ENCODE measurements at regions of chr3 and their contacts with region 1.

Region 1: GRCh38 chr3:119559441-119559963 is at the start of gene CD80:
- DNase-seq: peak; percentile 58
- ATAC-seq: peak; percentile 54
- H3K4me3 Mint-ChIP-seq: peak within 1 kb of the TSS; percentile 90
- H3K27ac Mint-ChIP-seq: peak within 1 kb of the TSS; percentile 88
- H3K4me1 Mint-ChIP-seq: peaks cover 92% of the 10 kb centered on the region
- H3K27me3 Mint-ChIP-seq: no peaks in the 10 kb centered on the region
- CTCF ChIP-seq: no peak
- total RNA-seq, gene CD80: 71.4 and 88.1 TPM in 2 replicates

Region 2: GRCh38 chr3:119293871-119294695 is 265.4 kb before region 1 on chr3 and contains the start of gene ARHGAP31:
- CTCF ChIA-PET with region 1: no interaction called
- POLR2A ChIA-PET with region 1: no interaction called
- intact Hi-C with region 1: loop called (anchors 1 kb)
- DNase-seq: peak; percentile 56
- ATAC-seq: peak; percentile 73
- H3K4me3 Mint-ChIP-seq: peak within 1 kb of the TSS; percentile 88
- H3K27ac Mint-ChIP-seq: peak within 1 kb of the TSS; percentile 90
- H3K4me1 Mint-ChIP-seq: peaks cover 61% of the 10 kb centered on the region
- H3K27me3 Mint-ChIP-seq: no peaks in the 10 kb centered on the region
- CTCF ChIP-seq: no peak
- total RNA-seq, gene ARHGAP31: 23.7 and 26.0 TPM in 2 replicates

Region 3: DNA sequence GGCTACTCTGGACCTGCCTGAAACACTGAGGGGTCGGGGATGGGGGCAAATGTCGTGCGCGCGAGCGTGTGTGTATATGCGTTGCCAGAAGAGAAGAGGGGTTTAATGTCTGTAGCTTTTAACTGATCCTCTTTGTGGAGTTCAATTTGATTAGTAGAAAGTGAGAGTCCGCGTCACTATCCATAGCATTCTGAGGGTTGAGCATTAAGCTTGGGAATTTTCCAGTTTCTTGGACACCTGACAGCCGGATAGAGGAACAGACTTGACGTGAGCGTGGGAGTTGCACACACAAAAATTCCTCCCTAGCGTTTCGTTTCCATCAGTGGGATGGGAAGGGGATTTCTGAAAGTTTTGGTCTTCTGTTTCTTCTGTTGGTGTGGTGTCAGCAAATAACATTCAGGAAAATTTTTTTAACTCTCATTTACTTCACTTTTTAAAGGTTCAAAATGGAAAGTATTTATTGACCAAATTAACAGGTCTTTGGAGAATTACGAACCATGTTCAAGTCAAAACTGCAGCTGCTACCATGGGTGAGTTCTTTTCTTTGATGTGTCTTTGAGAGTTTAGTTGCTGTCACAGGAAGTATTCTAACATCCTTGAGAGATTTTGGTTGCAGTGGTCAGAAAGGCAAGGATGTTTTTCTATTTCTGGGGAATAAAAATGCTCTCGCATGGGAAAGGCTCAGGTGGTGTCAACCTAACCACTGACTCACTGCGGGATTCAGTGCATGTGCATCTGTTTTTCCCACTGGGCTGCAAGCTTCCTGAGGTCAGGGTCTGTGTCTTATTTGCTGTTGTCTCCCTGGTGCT is 89.9 kb before region 1 on chr3:
- CTCF ChIA-PET with region 1: no interaction called
- POLR2A ChIA-PET with region 1: interaction called, 3 read pairs
- intact Hi-C with region 1: loop called (anchors 1 kb)
- DNase-seq: no peak
- ATAC-seq: peak; percentile 45
- H3K4me3 Mint-ChIP-seq: peak overlapping the region; percentile 93
- H3K27ac Mint-ChIP-seq: peak overlapping the region; percentile 90
- H3K4me1 Mint-ChIP-seq: peaks cover 32% of the 10 kb centered on the region
- H3K27me3 Mint-ChIP-seq: no peaks in the 10 kb centered on the region
- CTCF ChIP-seq: no peak

Region 4: DNA sequence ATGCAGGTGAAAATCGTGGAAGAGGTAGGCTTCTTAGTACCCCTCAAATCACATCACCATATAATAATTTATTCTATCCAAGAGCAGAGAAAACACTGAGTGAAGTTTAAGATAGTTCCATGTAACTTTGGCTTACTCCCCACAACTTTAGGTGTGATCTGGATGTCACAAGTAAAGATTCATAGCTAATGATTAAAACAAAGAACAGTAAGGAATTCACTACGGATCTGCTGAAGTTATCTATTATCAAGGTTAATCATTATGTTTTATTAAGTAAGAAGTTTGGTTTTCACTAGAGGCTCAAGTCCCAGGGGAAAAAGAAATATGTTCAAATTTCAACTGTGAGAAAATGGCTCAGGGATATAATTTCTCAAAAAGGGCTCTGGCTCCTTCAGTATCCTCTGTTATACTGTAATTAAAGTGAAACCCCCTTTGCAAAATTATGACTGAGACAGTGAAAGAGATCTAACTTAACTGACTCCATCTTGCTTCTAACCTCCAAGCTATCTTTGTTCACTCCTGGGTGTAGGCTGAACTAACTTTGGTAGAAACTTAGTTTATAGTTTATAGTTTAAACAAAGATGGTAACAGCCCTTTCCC is 17.2 kb before region 1 on chr3:
- CTCF ChIA-PET with region 1: interaction called, 5 read pairs
- POLR2A ChIA-PET with region 1: interaction called, 20 read pairs
- intact Hi-C with region 1: loop called (anchors 1 kb)
- DNase-seq: no peak
- ATAC-seq: no peak
- H3K4me3 Mint-ChIP-seq: peak overlapping the region; percentile 33
- H3K27ac Mint-ChIP-seq: peak overlapping the region; percentile 77
- H3K4me1 Mint-ChIP-seq: peaks cover 79% of the 10 kb centered on the region
- H3K27me3 Mint-ChIP-seq: no peaks in the 10 kb centered on the region
- CTCF ChIP-seq: no peak

Region 5: GRCh38 chr3:119637679-119638525 is 78.4 kb after region 1 on chr3:
- CTCF ChIA-PET with region 1: interaction called, 6 read pairs
- POLR2A ChIA-PET with region 1: interaction called, 4 read pairs
- intact Hi-C with region 1: loop called (anchors 1 kb)
- DNase-seq: no peak
- ATAC-seq: peak; percentile 54
- H3K4me3 Mint-ChIP-seq: peak overlapping the region; percentile 78
- H3K27ac Mint-ChIP-seq: peak overlapping the region; percentile 98
- H3K4me1 Mint-ChIP-seq: peaks cover 44% of the 10 kb centered on the region
- H3K27me3 Mint-ChIP-seq: no peaks in the 10 kb centered on the region
- CTCF ChIP-seq: no peak

Region 6: GRCh38 chr3:119831022-119831421 is 271.5 kb after region 1 on chr3:
- CTCF ChIA-PET with region 1: no interaction called
- POLR2A ChIA-PET with region 1: no interaction called
- intact Hi-C with region 1: no loop called
- DNase-seq: no peak
- ATAC-seq: no peak
- H3K4me3 Mint-ChIP-seq: no peak overlapping the region
- H3K27ac Mint-ChIP-seq: no peak overlapping the region
- H3K4me1 Mint-ChIP-seq: peaks cover 7% of the 10 kb centered on the region
- H3K27me3 Mint-ChIP-seq: no peaks in the 10 kb centered on the region
- CTCF ChIP-seq: no peak

Region 7: DNA sequence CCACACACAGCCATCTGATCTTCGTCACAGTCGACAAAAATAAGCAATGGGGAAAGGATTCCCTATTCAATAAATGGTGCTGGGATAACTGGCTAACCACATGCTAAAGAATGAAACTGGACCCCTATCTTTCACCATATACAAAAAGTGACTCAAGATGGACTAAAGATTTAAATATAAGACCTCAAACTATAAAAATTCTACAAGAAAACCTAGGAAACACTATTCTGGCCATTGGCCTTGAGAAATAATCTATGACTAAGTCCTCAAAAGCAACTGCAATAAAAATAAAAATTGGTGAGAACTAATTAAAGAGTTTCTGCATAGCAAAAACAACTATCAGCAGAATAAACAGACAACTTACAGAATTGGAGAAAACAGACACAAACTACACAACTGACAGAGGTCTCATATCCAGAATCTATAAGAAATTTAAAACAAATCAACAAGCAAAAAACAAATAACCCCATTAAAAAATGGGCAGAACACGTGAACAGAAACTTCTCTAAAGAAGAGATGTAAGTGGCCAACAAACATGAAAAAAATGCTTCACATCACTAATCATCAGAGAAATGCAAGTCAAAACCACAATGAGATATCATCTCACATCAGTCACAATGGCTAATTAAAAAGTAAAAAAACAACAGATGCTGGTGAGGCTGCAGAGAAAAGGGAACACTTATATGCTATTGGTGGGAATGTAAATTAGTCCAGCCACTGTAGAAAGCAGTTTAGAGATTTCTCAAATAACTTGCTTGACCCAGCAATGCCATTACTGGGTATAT is 326.4 kb after region 1 on chr3:
- CTCF ChIA-PET with region 1: no interaction called
- POLR2A ChIA-PET with region 1: no interaction called
- intact Hi-C with region 1: no loop called
- DNase-seq: no peak
- ATAC-seq: no peak
- H3K4me3 Mint-ChIP-seq: no peak overlapping the region
- H3K27ac Mint-ChIP-seq: no peak overlapping the region
- H3K4me1 Mint-ChIP-seq: no peaks in the 10 kb centered on the region
- H3K27me3 Mint-ChIP-seq: no peaks in the 10 kb centered on the region
- CTCF ChIP-seq: no peak